Activated T-helper 2 cell treated with anti-CD3 and anti-CD28 coated beads, Interferon-gamma antibody, Interleukin-2, Interleukin-4, amounts not matched to agents 10 μg/mL and 5 μg/mL and 100 μg/mL, durations not matched to agents 14 hours and 24 hours and 36 hours (primary cell): ENCODE measurements at regions of chr1 and their contacts with region 1.

Region 1: DNA sequence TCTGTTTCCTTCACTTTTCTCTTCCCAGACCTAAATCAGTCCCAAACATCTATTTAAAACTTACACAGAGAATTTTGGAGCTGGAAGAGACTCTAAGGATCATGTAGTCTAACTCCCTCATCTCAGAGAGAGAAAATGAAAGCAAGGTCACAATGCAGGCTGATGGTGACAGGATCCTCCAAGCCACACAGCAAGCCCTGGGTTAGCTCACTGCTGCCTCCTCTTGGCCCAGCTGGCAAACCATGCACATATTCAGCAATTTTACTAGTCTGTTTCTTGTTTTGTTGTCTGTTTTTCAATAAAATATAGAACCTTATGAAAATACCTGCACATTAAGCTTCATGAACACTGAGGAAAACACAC is 27.7 kb upstream of the LY9 start:
- DNase-seq: peak; percentile 80
- H3K4me3 Mint-ChIP-seq: peak overlapping the region; percentile 78
- H3K27ac Mint-ChIP-seq: peak overlapping the region; percentile 92
- H3K4me1 Mint-ChIP-seq: peaks cover 29% of the 10 kb centered on the region
- H3K27me3 Mint-ChIP-seq: no peaks in the 10 kb centered on the region

Region 2: GRCh38 chr1:160629286-160630210 is 138.7 kb before region 1 on chr1:
- intact Hi-C with region 1: loop called (anchors 5 kb)
- DNase-seq: peak; percentile 73
- H3K4me3 Mint-ChIP-seq: peak overlapping the region; percentile 20
- H3K27ac Mint-ChIP-seq: peak overlapping the region; percentile 100
- H3K4me1 Mint-ChIP-seq: peaks cover 95% of the 10 kb centered on the region
- H3K27me3 Mint-ChIP-seq: no peaks in the 10 kb centered on the region

Region 3: DNA sequence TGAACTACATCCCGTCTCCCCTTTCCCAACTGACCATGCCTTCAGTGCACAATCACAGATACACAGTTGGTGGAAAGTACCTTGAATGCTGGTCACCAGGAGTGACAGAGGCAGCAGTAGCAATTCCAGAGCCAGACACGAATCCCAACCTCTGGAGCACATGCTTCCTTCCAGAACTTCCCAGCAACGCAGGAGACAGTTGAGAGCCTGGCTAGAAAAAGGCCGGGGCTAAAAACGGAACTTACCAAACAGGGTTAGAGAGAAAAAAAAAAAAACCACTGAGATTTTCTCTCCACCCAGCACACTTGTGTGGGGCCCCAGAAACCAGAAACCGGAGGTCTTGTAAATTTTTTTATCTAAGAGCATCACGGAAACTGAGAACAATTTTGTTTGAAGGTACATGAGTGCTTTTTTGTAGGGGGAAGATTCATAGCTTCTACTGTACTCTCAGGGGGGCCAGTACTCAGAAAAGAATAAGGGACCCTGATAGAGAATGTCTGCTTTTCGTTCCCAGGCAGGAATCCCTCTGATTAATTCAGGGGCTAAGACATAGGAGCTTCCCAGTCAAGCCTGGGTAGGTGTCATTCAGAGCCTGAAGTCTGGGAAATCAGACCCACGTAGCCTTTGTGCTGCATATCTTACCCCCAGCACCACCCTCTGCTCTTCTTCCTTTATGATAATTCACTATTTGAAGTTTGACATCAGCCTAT is 56.5 kb before region 1 on chr1 and contains the start of gene CD48:
- intact Hi-C with region 1: loop called (anchors 5 kb)
- DNase-seq: peak; percentile 56
- H3K4me3 Mint-ChIP-seq: no peak within 1 kb of the TSS
- H3K27ac Mint-ChIP-seq: no peak within 1 kb of the TSS
- H3K4me1 Mint-ChIP-seq: peaks cover 29% of the 10 kb centered on the region
- H3K27me3 Mint-ChIP-seq: no peaks in the 10 kb centered on the region
- total RNA-seq, gene CD48: 101 and 103 TPM in 2 replicates

Region 4: DNA sequence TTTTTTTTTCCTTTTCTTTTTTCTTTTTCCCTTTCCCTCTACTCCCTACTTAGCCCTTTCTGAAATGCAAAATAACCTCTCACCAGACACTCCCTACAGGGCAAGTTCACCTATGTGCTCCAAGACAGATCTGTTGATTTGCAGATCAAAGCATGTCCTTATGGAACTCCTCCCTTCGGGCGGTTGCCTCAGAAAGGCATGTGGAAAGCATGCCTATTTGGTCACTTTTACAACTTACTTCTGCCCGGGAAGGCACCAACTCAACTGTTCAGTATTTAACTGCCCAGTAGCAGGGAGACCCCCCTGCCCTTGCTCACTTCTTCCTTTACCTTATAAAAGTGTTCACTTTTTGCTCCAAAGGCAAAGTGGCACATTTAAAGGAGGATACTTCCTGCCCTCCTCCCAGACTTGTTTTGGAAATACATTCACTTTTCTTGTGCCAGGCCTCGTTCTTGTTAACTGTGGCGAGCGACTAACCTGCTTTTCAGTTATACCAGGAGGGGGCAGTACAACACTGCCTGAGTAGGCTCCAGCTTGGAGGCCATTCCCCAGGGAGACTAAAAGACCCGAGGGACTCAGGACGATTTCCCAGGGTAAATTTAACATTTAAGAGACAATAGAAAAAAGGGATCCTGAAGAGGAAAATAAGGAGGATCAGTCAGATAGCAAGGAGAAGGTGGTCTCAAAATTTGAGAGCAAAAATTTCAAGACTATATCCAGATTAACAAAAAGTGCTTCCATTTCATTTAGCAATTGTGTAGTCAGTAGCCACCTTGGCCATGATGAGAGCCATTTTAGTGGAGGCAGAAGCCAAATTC is 41.6 kb before region 1 on chr1:
- intact Hi-C with region 1: loop called (anchors 1 kb)
- DNase-seq: peak; percentile 54
- H3K4me3 Mint-ChIP-seq: no peak overlapping the region
- H3K27ac Mint-ChIP-seq: no peak overlapping the region
- H3K4me1 Mint-ChIP-seq: peaks cover 30% of the 10 kb centered on the region
- H3K27me3 Mint-ChIP-seq: no peaks in the 10 kb centered on the region

Region 5: DNA sequence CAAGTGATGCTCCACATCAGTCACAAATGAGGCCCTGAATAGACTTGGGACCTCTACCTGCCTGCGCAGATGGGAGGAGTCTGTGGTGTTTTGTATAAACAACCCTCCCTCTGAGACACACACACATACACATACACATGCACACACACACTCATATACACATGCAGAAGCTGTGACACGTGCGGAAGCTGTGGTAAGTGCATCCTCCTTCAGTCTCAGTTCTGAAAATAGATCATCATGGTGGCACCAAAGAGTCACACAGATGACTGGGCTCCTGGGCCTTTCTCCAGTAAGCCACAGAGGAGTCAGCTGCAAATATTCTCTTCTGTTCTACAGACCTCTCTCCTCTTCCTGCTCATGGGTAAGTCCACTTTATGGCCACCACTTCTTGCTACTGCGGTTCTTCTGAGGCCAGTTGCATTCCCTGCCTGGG is 27.7 kb after region 1 on chr1 and contains the start of gene LY9:
- intact Hi-C with region 1: loop called (anchors 2 kb)
- DNase-seq: peak; percentile 79
- H3K4me3 Mint-ChIP-seq: peak within 1 kb of the TSS; percentile 75
- H3K27ac Mint-ChIP-seq: peak within 1 kb of the TSS; percentile 80
- H3K4me1 Mint-ChIP-seq: peaks cover 62% of the 10 kb centered on the region
- H3K27me3 Mint-ChIP-seq: no peaks in the 10 kb centered on the region
- total RNA-seq, gene LY9: 0.28 and 0.34 TPM in 2 replicates

Region 6: DNA sequence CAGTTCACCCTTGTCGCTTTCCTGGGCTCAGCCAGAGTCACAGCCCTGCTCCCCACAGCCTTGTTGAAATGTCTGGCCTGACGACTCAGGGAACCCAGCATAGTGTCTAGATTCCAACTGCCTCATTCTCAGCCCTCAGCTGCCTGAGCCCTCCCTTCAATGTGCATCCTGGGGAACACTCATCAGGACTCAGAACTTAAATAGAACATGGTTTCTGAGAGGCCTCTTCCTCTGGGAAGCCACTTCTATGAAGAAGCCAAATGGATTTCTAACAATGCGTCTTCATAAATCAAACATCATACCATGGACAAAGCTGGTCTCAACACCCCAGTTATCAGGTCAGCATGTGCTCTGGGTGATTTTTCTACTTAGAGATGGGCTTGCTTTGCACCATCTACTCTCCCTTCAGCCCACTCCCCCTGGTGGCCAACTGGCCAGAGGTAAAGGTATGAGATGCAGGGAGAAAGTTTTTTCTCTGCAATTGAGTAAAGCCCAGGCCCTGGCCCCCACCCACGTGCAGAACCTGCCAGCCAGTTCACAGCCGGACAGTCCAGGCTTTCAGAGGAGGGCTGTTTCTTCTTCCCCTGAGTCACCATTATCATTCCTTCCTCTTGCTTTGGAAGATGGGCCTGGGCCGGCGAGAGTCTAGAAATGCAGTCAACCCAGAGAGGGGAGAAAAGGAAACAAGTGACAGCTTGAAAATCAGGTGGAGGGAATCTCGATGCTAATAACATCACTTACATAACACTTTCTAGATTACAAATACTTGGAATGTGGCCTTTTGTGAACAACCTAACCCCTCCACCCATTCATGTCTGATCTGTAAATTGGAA is 62.3 kb after region 1 on chr1:
- intact Hi-C with region 1: loop called (anchors 2 kb)
- DNase-seq: peak; percentile 59
- H3K4me3 Mint-ChIP-seq: no peak overlapping the region
- H3K27ac Mint-ChIP-seq: no peak overlapping the region
- H3K4me1 Mint-ChIP-seq: peaks cover 13% of the 10 kb centered on the region
- H3K27me3 Mint-ChIP-seq: no peaks in the 10 kb centered on the region